GM10248 (cell line): ENCODE measurements at regions of chr2 and their contacts with region 1.

Region 1: GRCh38 chr2:33583194-33583938 is 15.7 kb downstream of the FAM98A start:
- DNase-seq: peak; percentile 28
- CTCF ChIP-seq: peak; percentile 78

Region 2: GRCh38 chr2:33412920-33413319 is 170.4 kb before region 1 on chr2:
- CTCF ChIA-PET with region 1: interaction called, 28 read pairs
- POLR2A ChIA-PET with region 1: no interaction called
- DNase-seq: peak; percentile 31
- CTCF ChIP-seq: peak; percentile 27

Region 3: GRCh38 chr2:33475224-33476130 is 107.9 kb before region 1 on chr2:
- CTCF ChIA-PET with region 1: interaction called, 11 read pairs
- POLR2A ChIA-PET with region 1: no interaction called
- DNase-seq: peak; percentile 73
- CTCF ChIP-seq: peak; percentile 80

Region 4: DNA sequence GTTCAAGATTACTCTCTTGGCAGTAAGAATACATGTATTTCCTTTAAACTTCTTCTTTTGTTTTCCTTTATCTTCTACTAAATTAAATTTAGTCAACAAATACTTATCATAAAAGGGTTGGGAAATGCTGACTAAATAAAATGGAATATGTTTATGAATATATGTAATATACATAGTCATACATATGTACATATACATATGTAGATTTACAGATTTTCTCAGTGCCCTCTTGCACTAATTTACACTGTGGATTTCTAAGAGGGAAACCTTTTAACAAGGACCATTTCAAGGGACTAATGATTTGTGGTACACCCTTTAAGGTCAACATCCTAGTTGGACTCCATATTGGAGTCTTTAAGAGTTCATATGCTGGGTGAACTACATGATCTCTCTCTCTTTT is 21.5 kb before region 1 on chr2:
- CTCF ChIA-PET with region 1: interaction called, 15 read pairs
- POLR2A ChIA-PET with region 1: no interaction called
- DNase-seq: no peak
- CTCF ChIP-seq: no peak

Region 5: GRCh38 chr2:33570681-33571080 is 12.7 kb before region 1 on chr2:
- CTCF ChIA-PET with region 1: interaction called, 17 read pairs
- POLR2A ChIA-PET with region 1: no interaction called
- DNase-seq: no peak
- CTCF ChIP-seq: no peak

Region 6: DNA sequence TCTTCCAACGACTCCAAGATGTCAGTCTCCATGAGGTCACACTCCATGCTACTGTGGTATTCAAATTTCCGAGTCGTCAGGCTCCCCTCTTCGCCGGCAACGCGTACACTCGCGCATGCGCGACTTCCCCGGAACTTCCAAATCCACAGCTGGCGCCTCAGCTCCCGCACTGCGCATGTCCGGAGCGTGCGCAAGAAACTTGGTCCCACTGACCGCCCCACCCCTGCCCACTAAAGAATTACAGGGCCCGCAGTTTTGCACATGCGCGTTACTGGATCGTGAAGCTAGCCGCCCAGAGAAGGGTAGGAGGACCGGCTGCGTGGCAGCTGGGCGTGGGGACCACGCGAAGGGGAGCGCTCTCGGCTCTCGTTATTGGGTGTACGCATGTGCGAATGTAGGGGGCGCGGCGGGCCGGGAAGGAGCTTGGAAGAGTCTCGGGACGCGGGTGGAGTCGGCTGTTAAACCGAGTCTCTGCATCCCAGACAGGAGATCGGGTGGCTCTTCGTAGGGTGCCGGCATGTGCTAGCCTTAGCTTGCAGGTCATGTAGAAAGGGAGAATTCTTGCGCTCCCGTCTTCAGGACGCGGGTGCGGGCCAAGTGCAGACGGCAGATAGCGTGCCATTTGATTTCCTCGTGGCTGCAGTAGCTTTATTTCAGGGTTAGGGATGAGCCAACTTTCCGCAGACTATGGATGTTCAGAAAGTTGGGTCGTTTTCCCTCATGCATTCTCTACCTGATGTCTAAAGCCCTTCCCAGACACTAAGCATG is 16.0 kb after region 1 on chr2 and contains the start of gene FAM98A:
- CTCF ChIA-PET with region 1: interaction called, 41 read pairs
- POLR2A ChIA-PET with region 1: no interaction called
- DNase-seq: peak; percentile 97
- CTCF ChIP-seq: no peak